CD4-positive, alpha-beta T cell (primary cell): ENCODE measurements at regions of chr20 and their contacts with region 1.

Region 1: GRCh38 chr20:45450097-45450818 is 19.3 kb upstream of the WFDC2 start:
- DNase-seq: peak in 4 of 14 experiments; percentile 25 to 71 (median 62)
- ATAC-seq: peak; percentile 37
- H3K4me3 ChIP-seq: no peak overlapping the region
- H3K4me3 Mint-ChIP-seq: no peak overlapping the region
- H3K27ac ChIP-seq: no peak overlapping the region
- H3K27ac Mint-ChIP-seq: no peak overlapping the region
- H3K4me1 ChIP-seq: peaks cover 4% of the 10 kb centered on the region
- H3K4me1 Mint-ChIP-seq: peaks cover 12% of the 10 kb centered on the region
- H3K27me3 ChIP-seq: peaks cover 6% of the 10 kb centered on the region in 2 experiments
- H3K27me3 Mint-ChIP-seq: peaks cover 20% of the 10 kb centered on the region
- CTCF ChIP-seq: peak; percentile 74

Region 2: GRCh38 chr20:45320948-45321595 is 129.2 kb before region 1 on chr20:
- CTCF ChIA-PET with region 1: interaction called, 3 read pairs
- POLR2A ChIA-PET with region 1: interaction called, 3 read pairs
- intact Hi-C with region 1: loop called (anchors 1 kb)
- DNase-seq: peak in 4 of 14 experiments; percentile 10 to 63 (median 56)
- ATAC-seq: peak; percentile 73
- H3K4me3 ChIP-seq: no peak overlapping the region
- H3K4me3 Mint-ChIP-seq: no peak overlapping the region
- H3K27ac ChIP-seq: no peak overlapping the region
- H3K27ac Mint-ChIP-seq: peak overlapping the region; percentile 17
- H3K4me1 ChIP-seq: peaks cover 31% of the 10 kb centered on the region
- H3K4me1 Mint-ChIP-seq: peaks cover 21% of the 10 kb centered on the region
- H3K27me3 ChIP-seq: peaks cover 0 to 3% of the 10 kb centered on the region in 2 experiments
- H3K27me3 Mint-ChIP-seq: peaks cover 10% of the 10 kb centered on the region
- CTCF ChIP-seq: no peak